Head of caudate nucleus (tissue), 42 donors: ENCODE measurements at regions of chr10 and their contacts with region 1.

Region 1: DNA sequence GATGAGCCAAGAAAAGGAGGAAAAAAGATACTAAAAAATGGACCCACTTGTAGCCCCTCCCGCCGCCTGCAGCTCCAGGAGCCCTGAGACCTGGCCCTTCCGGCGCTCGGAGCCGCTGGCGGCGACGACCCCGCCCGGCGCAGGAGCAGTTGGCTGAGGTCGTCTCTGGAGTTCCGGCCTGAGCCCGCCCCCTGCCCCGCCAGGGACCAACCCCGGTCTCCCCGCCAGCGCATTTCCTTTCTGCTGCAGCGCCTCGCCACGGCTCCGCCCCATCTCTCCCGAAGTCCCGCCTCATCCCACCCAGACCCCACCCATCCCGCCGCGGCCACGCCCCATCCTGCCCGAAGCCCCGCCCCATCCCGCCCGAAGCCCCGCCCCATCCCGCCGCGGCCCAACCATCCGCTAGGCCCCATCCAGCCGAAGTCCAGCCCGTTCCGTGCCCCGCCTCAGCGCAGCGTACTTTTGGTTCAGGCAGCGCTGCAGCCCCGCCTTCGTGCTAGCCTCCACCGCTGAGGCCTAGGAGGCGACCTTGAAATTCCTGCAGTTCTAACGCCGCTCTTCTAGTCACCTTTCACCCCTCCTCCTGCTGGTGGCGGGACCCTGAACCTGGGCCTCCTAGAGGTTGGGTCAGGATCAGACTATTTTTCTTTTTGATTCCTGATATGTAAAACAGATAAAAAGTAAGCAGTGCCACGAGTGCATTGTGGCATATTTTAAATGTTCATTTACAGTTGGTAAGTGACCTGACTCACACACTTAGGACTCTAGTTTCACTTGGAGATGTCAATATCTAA is at the start of gene STN1:
- DNase-seq: peak; percentile 92 to 100 (median 98)

Region 2: DNA sequence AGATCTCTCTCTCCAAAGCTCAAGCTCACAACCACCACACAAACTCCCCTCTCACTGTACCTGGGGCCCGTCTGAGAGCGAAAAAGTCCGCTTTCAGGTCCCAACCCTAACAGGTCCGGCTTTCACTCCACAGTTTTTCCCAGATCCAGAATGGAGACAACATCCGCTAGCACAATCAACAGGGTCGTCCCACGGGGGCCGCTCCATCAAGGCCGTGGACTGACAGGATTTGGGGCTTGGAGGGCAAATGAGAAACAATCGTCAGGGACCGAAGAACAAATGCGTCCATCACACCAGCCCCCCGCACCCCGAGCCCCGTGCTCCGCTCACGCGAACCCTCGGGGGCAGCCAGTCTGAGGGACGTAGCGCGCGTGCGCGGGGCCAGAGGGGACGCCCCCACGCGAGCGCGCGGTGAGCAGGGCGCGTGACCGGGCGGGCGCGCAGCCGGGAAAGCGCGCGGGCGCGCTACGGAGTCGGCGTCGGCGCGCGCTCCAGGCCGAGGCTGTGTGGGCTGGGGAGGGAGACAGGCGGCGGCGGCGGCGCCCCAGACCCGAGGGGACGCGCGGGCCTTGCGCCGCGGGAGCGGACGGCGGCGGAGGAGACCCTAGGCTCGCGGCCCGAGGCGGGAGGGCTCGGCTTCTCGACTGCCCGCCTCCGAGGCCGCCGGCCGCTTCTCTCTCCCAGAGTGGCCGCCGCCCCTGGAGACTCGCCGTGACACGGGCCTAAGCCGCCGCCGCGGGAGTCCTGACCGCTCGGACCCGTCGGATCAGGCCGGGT is 48.6 kb after region 1 on chr10 and contains the start of gene SLK:
- intact Hi-C with region 1: loop called (anchors 2 kb)
- DNase-seq: peak; percentile 46 to 92 (median 84)

Region 3: GRCh38 chr10:104028146-104028545 is 109.9 kb after region 1 on chr10:
- intact Hi-C with region 1: loop called (anchors 10 kb)
- DNase-seq: peak in 40 of 42 donors; percentile 45 to 90 (median 72)

Region 4: GRCh38 chr10:104150139-104150538 is 231.9 kb after region 1 on chr10:
- intact Hi-C with region 1: no loop called
- DNase-seq: no peak